ENCODE measurements at regions of chr12 and their contacts with region 1.

Region 1: GRCh38 chr12:130933269-130933995 is 20.3 kb upstream of the ADGRD1 start:
- DNase-seq: peak in 1 of 2 experiments; percentile 26
- ATAC-seq: peak; percentile 41 to 63; a peak in 5 of 6 replicates
- H3K4me3 ChIP-seq: peak overlapping the region; percentile 28; the same call in 2 of the 3 replicates
- H3K27ac ChIP-seq: no peak overlapping the region
- H3K4me1 ChIP-seq: peaks cover 5% of the 10 kb centered on the region; the same call in 1 of the 3 replicates
- CTCF ChIP-seq: no peak
- EP300 ChIP-seq: no peak
- POLR2A ChIP-seq: no peak
- RAD21 ChIP-seq: no peak

Region 2: DNA sequence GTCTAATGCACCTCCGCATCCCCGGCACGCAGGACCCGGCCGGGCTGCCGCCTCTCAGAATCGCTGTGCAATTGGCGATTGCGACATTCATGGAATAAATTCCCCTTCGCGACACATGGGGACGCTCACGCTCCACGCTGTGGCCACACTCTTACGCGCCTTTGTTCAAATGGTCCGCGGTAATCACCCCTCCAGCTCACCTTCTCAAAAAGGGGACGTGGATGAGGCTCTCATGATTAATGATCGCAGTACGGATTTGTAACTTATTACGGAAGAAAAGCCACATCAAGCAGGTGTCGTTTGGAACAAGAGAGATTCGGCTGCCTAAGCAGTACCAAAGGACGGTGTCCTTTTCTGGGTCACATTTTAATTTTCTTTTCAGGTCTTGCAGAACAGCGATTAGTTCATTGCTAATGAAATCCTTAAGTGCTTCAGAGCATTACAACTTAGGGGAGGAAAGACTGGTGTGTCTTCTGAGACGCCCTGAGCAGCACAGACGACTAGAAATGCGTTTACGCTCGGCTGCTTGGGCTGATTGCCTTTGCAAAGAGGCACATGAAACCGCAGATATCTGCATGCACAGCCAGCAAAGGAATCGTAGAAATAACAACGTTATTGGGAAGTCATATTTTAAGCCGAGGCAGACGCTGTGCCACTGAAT is 17.1 kb before region 1 on chr12:
- CTCF ChIA-PET with region 1: interaction called, 18 read pairs
- POLR2A ChIA-PET with region 1: no interaction called
- DNase-seq: peak; percentile 56 to 74
- ATAC-seq: peak; percentile 48 to 90; a peak in 5 of 6 replicates
- H3K4me3 ChIP-seq: peak overlapping the region; percentile 21; the same call in 1 of the 3 replicates
- H3K27ac ChIP-seq: no peak overlapping the region
- H3K4me1 ChIP-seq: peaks cover 15% of the 10 kb centered on the region; the same call in 1 of the 3 replicates
- CTCF ChIP-seq: peak; percentile 92
- EP300 ChIP-seq: no peak
- POLR2A ChIP-seq: no peak
- RAD21 ChIP-seq: peak; percentile 97

Measured in A549 (cell line).